ENCODE measurements at regions of chr2 and their contacts with region 1.

Region 1: DNA sequence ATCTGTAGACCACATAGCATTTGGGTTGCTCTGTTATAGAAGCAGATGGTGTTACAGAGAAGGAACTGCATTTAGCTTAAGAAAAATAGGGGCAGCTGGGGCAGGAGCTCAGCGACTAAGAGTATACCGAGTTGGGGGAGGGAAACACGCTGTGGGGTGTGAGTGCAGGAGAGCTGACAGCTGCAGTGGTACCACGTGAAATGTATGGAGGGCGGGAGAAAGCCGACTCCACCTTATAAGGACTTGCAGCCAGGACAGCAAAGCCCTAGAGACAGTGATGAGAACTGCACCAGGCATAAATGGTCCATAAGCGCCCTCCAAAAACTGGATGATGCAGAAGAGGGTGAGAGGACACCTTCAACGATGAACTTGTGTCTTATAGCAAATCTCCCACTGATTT is 237.6 kb downstream of the PRKCE start:
- DNase-seq: peak in 2 of 3 donors; percentile 38 to 40
- H3K4me3 ChIP-seq: peak overlapping the region in 1 of 3 experiments; percentile 67
- H3K4me3 Mint-ChIP-seq: peak overlapping the region; percentile 55 to 59
- H3K27ac ChIP-seq: peak overlapping the region; percentile 81 to 96
- H3K27ac Mint-ChIP-seq: peak overlapping the region; percentile 90 to 99 (median 94)
- H3K4me1 ChIP-seq: peaks cover 99 to 100% of the 10 kb centered on the region in 2 donors
- H3K4me1 Mint-ChIP-seq: peaks cover 94% of the 10 kb centered on the region
- H3K27me3 ChIP-seq: no peaks in the 10 kb centered on the region
- H3K27me3 Mint-ChIP-seq: no peaks in the 10 kb centered on the region
- CTCF ChIP-seq: no peak

Region 2: GRCh38 chr2:45650851-45651414 is 238.1 kb before region 1 on chr2:
- intact Hi-C with region 1: loop called in 1 of 2 experiments (anchors 5 kb)
- DNase-seq: peak; percentile 92 to 96 (median 95)
- H3K4me3 ChIP-seq: peak overlapping the region; percentile 83 to 91 (median 85)
- H3K4me3 Mint-ChIP-seq: peak overlapping the region; percentile 95 to 98
- H3K27ac ChIP-seq: peak overlapping the region; percentile 86 to 87
- H3K27ac Mint-ChIP-seq: peak overlapping the region; percentile 87 to 96 (median 91)
- H3K4me1 ChIP-seq: peaks cover 28 to 30% of the 10 kb centered on the region in 2 donors
- H3K4me1 Mint-ChIP-seq: peaks cover 41% of the 10 kb centered on the region
- H3K27me3 ChIP-seq: no peaks in the 10 kb centered on the region
- H3K27me3 Mint-ChIP-seq: peaks cover 2 to 12% (median 3%) of the 10 kb centered on the region in 3 donors
- CTCF ChIP-seq: peak; percentile 19

Region 3: GRCh38 chr2:45759310-45759851 is 129.7 kb before region 1 on chr2:
- intact Hi-C with region 1: no loop called
- DNase-seq: no peak
- H3K4me3 ChIP-seq: no peak overlapping the region
- H3K4me3 Mint-ChIP-seq: no peak overlapping the region
- H3K27ac ChIP-seq: no peak overlapping the region
- H3K27ac Mint-ChIP-seq: no peak overlapping the region
- H3K4me1 ChIP-seq: peaks cover 3 to 10% of the 10 kb centered on the region in 2 donors
- H3K4me1 Mint-ChIP-seq: peaks cover 27% of the 10 kb centered on the region
- H3K27me3 ChIP-seq: no peaks in the 10 kb centered on the region
- H3K27me3 Mint-ChIP-seq: peaks cover 0 to 1% (median 0%) of the 10 kb centered on the region in 3 donors
- CTCF ChIP-seq: no peak

Region 4: GRCh38 chr2:45935791-45936622 is 47.0 kb after region 1 on chr2:
- intact Hi-C with region 1: loop called in 1 of 2 experiments (anchors 5 kb)
- DNase-seq: peak; percentile 90 to 97 (median 96)
- H3K4me3 ChIP-seq: no peak overlapping the region
- H3K4me3 Mint-ChIP-seq: peak overlapping the region in 1 of 2 donors; percentile 48
- H3K27ac ChIP-seq: no peak overlapping the region
- H3K27ac Mint-ChIP-seq: peak overlapping the region in 6 of 7 donors; percentile 30 to 84 (median 70)
- H3K4me1 ChIP-seq: peaks cover 6% of the 10 kb centered on the region in 2 donors
- H3K4me1 Mint-ChIP-seq: peaks cover 10% of the 10 kb centered on the region
- H3K27me3 ChIP-seq: no peaks in the 10 kb centered on the region
- H3K27me3 Mint-ChIP-seq: no peaks in the 10 kb centered on the region
- CTCF ChIP-seq: peak; percentile 79

Measured in CD14-positive monocyte (primary cell).